ENCODE measurements at regions of chr13 and their contacts with region 1.

Region 1: GRCh38 chr13:77480066-77480465 is 55.4 kb upstream of the SCEL start:
- DNase-seq: no peak
- ATAC-seq: no peak
- H3K4me3 ChIP-seq: no peak overlapping the region
- H3K4me3 Mint-ChIP-seq: no peak overlapping the region
- H3K27ac ChIP-seq: no peak overlapping the region
- H3K27ac Mint-ChIP-seq: no peak overlapping the region
- H3K4me1 ChIP-seq: no peaks in the 10 kb centered on the region
- H3K4me1 Mint-ChIP-seq: peaks cover 0 to 14% (median 9%) of the 10 kb centered on the region in 7 donors
- H3K27me3 ChIP-seq: no peaks in the 10 kb centered on the region
- H3K27me3 Mint-ChIP-seq: peaks cover 0 to 6% (median 0%) of the 10 kb centered on the region in 5 donors

Region 2: GRCh38 chr13:76991796-76992547 is 488.1 kb before region 1 on chr13 and contains the start of gene CLN5:
- CTCF ChIA-PET with region 1: no interaction called
- POLR2A ChIA-PET with region 1: no interaction called
- intact Hi-C with region 1: loop called in 1 of 2 experiments (anchors 10 kb)
- DNase-seq: peak; percentile 93 to 98 (median 96)
- ATAC-seq: peak; percentile 92
- H3K4me3 ChIP-seq: peak within 1 kb of the TSS; percentile 87
- H3K4me3 Mint-ChIP-seq: peak within 1 kb of the TSS; percentile 88 to 99 (median 96)
- H3K27ac ChIP-seq: peak within 1 kb of the TSS; percentile 96
- H3K27ac Mint-ChIP-seq: peak within 1 kb of the TSS; percentile 96 to 99 (median 99)
- H3K4me1 ChIP-seq: peaks cover 12 to 19% of the 10 kb centered on the region in 2 donors
- H3K4me1 Mint-ChIP-seq: peaks cover 27 to 59% (median 53%) of the 10 kb centered on the region in 7 donors
- H3K27me3 ChIP-seq: peaks cover 0 to 3% of the 10 kb centered on the region in 2 donors
- H3K27me3 Mint-ChIP-seq: peaks cover 0 to 12% (median 0%) of the 10 kb centered on the region in 5 donors
- total RNA-seq, gene CLN5: 18.9 to 45.3 (median 27.7) TPM

Region 3: DNA sequence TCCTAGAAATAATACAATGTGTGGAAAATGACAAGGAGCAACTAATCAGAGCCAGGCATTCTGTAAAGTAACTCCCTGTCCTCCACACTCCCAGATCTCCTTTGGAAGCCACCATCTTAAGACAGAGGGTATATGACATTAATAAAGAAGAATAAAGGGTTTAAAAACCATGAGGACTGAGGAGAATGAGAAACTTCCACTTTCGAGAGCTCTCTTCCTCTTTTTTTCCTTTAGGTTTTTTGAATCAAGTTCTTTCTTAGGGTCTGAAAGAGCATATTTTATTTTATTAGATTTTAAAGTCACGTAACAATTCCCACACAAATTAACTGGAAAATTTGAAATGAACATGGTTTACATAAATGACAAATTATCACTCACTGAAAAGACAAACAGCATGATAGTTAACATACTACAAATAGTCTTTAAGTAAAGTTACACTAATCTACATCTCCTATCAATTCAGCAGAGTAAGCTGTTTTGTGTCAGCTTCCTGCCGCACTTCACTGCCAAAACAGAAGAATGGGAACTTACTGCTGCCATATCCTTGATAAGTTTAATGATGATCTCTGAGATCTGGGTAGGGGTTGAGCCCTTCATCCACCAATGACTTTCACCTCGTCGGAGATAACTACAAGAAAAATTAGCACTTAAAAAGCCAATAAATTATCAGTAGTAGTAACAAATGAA is 414.5 kb before region 1 on chr13:
- CTCF ChIA-PET with region 1: no interaction called
- POLR2A ChIA-PET with region 1: no interaction called
- intact Hi-C with region 1: no loop called
- DNase-seq: no peak
- ATAC-seq: no peak
- H3K4me3 ChIP-seq: no peak overlapping the region
- H3K4me3 Mint-ChIP-seq: no peak overlapping the region
- H3K27ac ChIP-seq: no peak overlapping the region
- H3K27ac Mint-ChIP-seq: peak overlapping the region in 5 of 9 donors; percentile 23 to 80 (median 74)
- H3K4me1 ChIP-seq: no peaks in the 10 kb centered on the region
- H3K4me1 Mint-ChIP-seq: peaks cover 0 to 2% (median 0%) of the 10 kb centered on the region in 7 donors
- H3K27me3 ChIP-seq: no peaks in the 10 kb centered on the region
- H3K27me3 Mint-ChIP-seq: no peaks in the 10 kb centered on the region

Region 4: DNA sequence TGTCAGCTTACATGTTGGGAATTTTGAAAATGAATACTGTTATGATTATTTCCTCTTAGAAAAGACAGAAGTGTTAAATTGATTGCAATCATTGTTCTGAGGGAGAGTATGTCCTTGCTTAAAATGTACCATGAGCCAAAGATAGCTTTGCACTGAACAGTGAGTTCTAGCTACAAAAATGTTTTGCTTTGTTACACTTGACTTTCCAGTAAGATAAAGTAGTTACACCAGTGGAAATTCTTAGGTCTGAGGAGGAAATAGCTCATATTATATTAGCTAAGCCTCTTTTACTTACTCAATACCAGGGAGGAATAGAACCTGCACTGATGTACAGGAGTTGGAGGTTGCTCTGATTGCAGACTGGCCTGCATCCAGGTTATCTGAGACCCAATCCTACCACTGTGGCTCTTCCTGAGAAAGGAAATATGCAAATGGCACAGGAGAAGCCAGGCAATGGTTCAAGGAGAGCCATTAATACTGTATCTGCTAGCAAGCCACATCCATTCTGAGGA is 400.1 kb before region 1 on chr13:
- CTCF ChIA-PET with region 1: no interaction called
- POLR2A ChIA-PET with region 1: no interaction called
- intact Hi-C with region 1: loop called in 1 of 2 experiments (anchors 5 kb)
- DNase-seq: no peak
- ATAC-seq: no peak
- H3K4me3 ChIP-seq: no peak overlapping the region
- H3K4me3 Mint-ChIP-seq: no peak overlapping the region
- H3K27ac ChIP-seq: no peak overlapping the region
- H3K27ac Mint-ChIP-seq: peak overlapping the region in 1 of 9 donors; percentile 7
- H3K4me1 ChIP-seq: no peaks in the 10 kb centered on the region
- H3K4me1 Mint-ChIP-seq: peaks cover 0 to 12% (median 3%) of the 10 kb centered on the region in 7 donors
- H3K27me3 ChIP-seq: no peaks in the 10 kb centered on the region
- H3K27me3 Mint-ChIP-seq: no peaks in the 10 kb centered on the region

Region 5: GRCh38 chr13:77184455-77184854 is 295.6 kb before region 1 on chr13:
- CTCF ChIA-PET with region 1: interaction called, 6 read pairs
- POLR2A ChIA-PET with region 1: no interaction called
- intact Hi-C with region 1: loop called in 1 of 2 experiments (anchors 2 kb)
- DNase-seq: peak in 1 of 9 donors; percentile 30
- ATAC-seq: peak; percentile 61
- H3K4me3 ChIP-seq: no peak overlapping the region
- H3K4me3 Mint-ChIP-seq: peak overlapping the region in 2 of 10 donors; percentile 8 to 16
- H3K27ac ChIP-seq: no peak overlapping the region
- H3K27ac Mint-ChIP-seq: peak overlapping the region in 8 of 9 donors; percentile 17 to 86 (median 68)
- H3K4me1 ChIP-seq: no peaks in the 10 kb centered on the region
- H3K4me1 Mint-ChIP-seq: peaks cover 10 to 29% (median 22%) of the 10 kb centered on the region in 7 donors
- H3K27me3 ChIP-seq: no peaks in the 10 kb centered on the region
- H3K27me3 Mint-ChIP-seq: no peaks in the 10 kb centered on the region

Region 6: GRCh38 chr13:77267362-77267761 is 212.7 kb before region 1 on chr13:
- CTCF ChIA-PET with region 1: interaction called, 4 read pairs
- POLR2A ChIA-PET with region 1: interaction called, 3 read pairs
- intact Hi-C with region 1: loop called (anchors 2 to 5 kb)
- DNase-seq: no peak
- ATAC-seq: no peak
- H3K4me3 ChIP-seq: no peak overlapping the region
- H3K4me3 Mint-ChIP-seq: no peak overlapping the region
- H3K27ac ChIP-seq: no peak overlapping the region
- H3K27ac Mint-ChIP-seq: no peak overlapping the region
- H3K4me1 ChIP-seq: no peaks in the 10 kb centered on the region
- H3K4me1 Mint-ChIP-seq: peaks cover 0 to 16% (median 4%) of the 10 kb centered on the region in 7 donors
- H3K27me3 ChIP-seq: no peaks in the 10 kb centered on the region
- H3K27me3 Mint-ChIP-seq: no peaks in the 10 kb centered on the region

Region 7: DNA sequence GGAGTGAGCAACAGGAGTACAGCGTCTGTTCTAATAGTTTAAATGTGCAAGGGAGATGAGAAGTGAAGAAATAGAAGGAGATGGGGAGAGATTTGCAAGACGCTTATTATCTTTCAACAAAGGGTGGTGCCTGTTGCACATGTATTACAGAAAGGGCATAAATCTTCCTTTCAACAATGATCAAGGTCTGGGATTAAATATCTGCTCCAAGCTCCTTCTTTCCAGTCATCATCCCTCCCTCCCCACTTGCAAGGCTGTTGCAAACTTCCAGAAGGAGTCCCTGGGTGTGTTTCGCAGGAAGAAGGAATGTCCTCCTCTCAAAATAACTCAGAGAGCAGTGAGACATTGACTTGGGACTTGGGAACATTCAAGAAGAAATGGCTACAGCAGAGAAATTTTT is 89.7 kb before region 1 on chr13:
- CTCF ChIA-PET with region 1: no interaction called
- POLR2A ChIA-PET with region 1: no interaction called
- intact Hi-C with region 1: loop called in 1 of 2 experiments (anchors 5 kb)
- DNase-seq: no peak
- ATAC-seq: no peak
- H3K4me3 ChIP-seq: no peak overlapping the region
- H3K4me3 Mint-ChIP-seq: no peak overlapping the region
- H3K27ac ChIP-seq: no peak overlapping the region
- H3K27ac Mint-ChIP-seq: no peak overlapping the region
- H3K4me1 ChIP-seq: no peaks in the 10 kb centered on the region
- H3K4me1 Mint-ChIP-seq: peaks cover 12 to 26% (median 19%) of the 10 kb centered on the region in 7 donors
- H3K27me3 ChIP-seq: no peaks in the 10 kb centered on the region
- H3K27me3 Mint-ChIP-seq: peaks cover 0 to 23% (median 0%) of the 10 kb centered on the region in 5 donors

Region 8: DNA sequence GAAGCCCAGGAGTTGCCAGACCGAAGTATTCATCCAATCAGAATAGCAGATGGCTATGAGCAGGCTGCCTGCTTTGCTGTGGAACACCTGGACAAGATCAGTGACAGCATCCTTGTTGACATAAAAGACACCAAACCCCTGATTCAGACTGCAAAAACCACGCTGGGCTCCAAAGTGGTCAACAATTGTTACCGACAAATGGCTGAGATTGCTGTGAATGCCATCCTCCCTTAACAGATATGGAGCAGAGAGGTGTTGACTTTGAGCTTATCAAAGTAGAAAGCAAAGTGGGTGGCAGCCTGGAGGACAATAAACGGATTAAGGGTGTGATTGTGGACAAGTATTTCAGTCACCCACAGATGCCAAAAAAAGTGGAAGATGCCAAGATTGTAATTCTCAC is 1429.2 kb after region 1 on chr13:
- CTCF ChIA-PET with region 1: no interaction called
- POLR2A ChIA-PET with region 1: no interaction called
- intact Hi-C with region 1: no loop called
- DNase-seq: no peak
- ATAC-seq: no peak
- H3K4me3 ChIP-seq: no peak overlapping the region
- H3K4me3 Mint-ChIP-seq: no peak overlapping the region
- H3K27ac ChIP-seq: no peak overlapping the region
- H3K27ac Mint-ChIP-seq: no peak overlapping the region
- H3K4me1 ChIP-seq: no peaks in the 10 kb centered on the region
- H3K4me1 Mint-ChIP-seq: no peaks in the 10 kb centered on the region
- H3K27me3 ChIP-seq: no peaks in the 10 kb centered on the region
- H3K27me3 Mint-ChIP-seq: peaks cover 0 to 13% (median 6%) of the 10 kb centered on the region in 5 donors